Activated T-helper 1 cell treated with anti-CD3 and anti-CD28 coated beads, Interleukin-12 subunit alpha, Interleukin-12 subunit beta, Interleukin-2, Interleukin-4 antibody, amounts not matched to agents 30 ng/mL and 10 ng/mL and 1 ng/mL, durations not matched to agents 14 hours and 24 hours and 36 hours (primary cell): ENCODE measurements at regions of chr5 and their contacts with region 1.

Region 1: DNA sequence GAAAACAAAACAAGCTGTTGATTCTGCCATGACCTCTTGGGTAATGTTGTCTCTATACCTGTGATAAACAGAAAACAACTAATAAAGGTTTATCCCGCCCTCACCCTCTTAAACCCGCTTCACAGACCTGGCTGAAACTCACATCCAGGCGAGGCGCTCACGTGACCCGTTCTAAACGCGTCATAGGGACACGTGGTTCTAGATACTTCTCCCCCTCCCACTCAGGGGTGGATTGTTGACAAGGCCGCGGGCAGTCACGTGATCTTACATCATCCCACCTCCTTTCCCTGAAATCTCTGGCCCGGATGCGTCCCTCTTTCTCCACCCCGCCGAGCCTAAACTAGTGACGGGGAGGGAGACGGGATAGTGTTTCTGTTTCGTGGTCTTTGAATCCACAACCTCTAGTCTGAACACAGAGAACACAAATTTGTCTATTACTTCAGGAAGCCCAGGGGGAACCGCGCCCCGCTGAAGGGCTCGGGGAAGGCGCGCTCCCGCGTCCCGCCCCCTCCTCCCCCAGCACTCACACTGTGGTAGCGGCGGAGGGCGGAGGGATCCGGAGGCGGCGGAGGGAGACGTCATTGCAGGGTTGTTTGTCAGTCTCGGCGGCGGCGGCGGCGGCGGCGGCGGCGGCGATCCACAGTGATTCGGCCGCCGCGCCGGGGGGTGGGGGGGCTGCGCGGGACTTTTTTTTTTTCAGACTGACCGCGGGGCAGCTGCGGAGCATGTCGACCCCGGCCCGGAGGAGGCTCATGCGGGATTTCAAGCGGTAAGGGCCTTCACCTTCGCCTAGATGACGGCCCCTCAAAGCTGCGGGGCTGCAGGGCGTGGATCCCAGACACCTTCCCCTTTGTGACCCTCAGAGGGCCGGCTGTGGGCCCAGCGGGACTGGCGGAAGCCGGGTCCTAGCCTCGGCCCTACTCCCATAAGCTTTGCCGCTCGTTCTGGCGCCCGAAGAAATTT is at the start of gene UBE2B:
- DNase-seq: peak; percentile 95
- H3K4me3 Mint-ChIP-seq: peak within 1 kb of the TSS; percentile 99
- H3K27ac Mint-ChIP-seq: peak within 1 kb of the TSS; percentile 97
- H3K4me1 Mint-ChIP-seq: peaks cover 66% of the 10 kb centered on the region
- H3K27me3 Mint-ChIP-seq: peaks cover 2% of the 10 kb centered on the region
- total RNA-seq, gene UBE2B: 98.9 and 108 TPM in 2 replicates

Region 2: DNA sequence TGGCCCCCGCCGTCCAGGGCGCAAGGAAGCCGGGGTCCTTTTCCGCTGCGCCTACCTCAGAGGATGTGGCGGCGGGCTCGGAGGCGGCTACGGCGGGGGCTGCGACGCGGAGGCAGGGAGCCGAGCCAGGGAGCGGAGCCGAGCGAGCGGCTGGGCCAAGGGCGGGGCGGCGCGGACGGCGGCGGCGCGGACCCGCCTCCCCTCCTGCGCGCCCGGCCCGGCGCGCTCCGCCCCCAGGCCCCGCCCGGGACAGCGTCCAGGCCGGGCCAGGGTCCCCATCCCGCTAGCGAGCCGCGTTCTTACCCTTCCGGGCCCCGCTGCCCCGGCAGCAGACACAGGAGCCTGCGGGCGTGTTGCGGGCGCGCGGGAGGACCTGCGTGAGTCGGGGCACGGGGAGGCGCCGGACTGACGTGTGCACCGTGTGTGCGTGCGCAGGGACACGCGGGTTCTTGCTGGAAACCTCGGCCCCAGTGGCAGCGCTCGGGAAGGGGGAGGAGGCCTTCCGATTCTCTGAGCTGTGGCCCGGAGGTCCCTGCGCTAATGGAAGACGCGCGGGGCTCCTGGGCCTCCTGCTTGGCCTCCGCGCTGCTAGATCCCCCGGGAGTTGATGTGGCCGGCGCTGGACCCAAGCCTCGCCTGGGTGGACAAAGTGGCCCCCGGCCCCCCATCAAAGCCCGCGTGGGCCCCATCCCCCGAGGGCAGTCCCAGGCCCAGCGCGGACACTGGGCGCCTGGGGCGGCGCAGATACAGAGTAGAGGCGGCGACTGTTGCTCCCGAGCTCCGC is 366.4 kb before region 1 on chr5 and contains the start of gene VDAC1:
- intact Hi-C with region 1: loop called (anchors 1 kb)
- DNase-seq: peak; percentile 78
- H3K4me3 Mint-ChIP-seq: peak within 1 kb of the TSS; percentile 93
- H3K27ac Mint-ChIP-seq: peak within 1 kb of the TSS; percentile 97
- H3K4me1 Mint-ChIP-seq: peaks cover 53% of the 10 kb centered on the region
- H3K27me3 Mint-ChIP-seq: peaks cover 2% of the 10 kb centered on the region
- total RNA-seq, gene VDAC1: 440 and 442 TPM in 2 replicates

Region 3: GRCh38 chr5:134411546-134412266 is 40.6 kb after region 1 on chr5 and contains the start of gene CDKN2AIPNL:
- intact Hi-C with region 1: loop called (anchors 1 kb)
- DNase-seq: peak; percentile 87
- H3K4me3 Mint-ChIP-seq: peak within 1 kb of the TSS; percentile 97
- H3K27ac Mint-ChIP-seq: peak within 1 kb of the TSS; percentile 90
- H3K4me1 Mint-ChIP-seq: peaks cover 26% of the 10 kb centered on the region
- H3K27me3 Mint-ChIP-seq: no peaks in the 10 kb centered on the region
- total RNA-seq, gene CDKN2AIPNL: 33.6 and 35.6 TPM in 2 replicates

Region 4: GRCh38 chr5:134586866-134587524 is 215.8 kb after region 1 on chr5:
- intact Hi-C with region 1: loop called (anchors 2 kb)
- DNase-seq: peak; percentile 72
- H3K4me3 Mint-ChIP-seq: no peak overlapping the region
- H3K27ac Mint-ChIP-seq: peak overlapping the region; percentile 52
- H3K4me1 Mint-ChIP-seq: peaks cover 14% of the 10 kb centered on the region
- H3K27me3 Mint-ChIP-seq: no peaks in the 10 kb centered on the region

Region 5: DNA sequence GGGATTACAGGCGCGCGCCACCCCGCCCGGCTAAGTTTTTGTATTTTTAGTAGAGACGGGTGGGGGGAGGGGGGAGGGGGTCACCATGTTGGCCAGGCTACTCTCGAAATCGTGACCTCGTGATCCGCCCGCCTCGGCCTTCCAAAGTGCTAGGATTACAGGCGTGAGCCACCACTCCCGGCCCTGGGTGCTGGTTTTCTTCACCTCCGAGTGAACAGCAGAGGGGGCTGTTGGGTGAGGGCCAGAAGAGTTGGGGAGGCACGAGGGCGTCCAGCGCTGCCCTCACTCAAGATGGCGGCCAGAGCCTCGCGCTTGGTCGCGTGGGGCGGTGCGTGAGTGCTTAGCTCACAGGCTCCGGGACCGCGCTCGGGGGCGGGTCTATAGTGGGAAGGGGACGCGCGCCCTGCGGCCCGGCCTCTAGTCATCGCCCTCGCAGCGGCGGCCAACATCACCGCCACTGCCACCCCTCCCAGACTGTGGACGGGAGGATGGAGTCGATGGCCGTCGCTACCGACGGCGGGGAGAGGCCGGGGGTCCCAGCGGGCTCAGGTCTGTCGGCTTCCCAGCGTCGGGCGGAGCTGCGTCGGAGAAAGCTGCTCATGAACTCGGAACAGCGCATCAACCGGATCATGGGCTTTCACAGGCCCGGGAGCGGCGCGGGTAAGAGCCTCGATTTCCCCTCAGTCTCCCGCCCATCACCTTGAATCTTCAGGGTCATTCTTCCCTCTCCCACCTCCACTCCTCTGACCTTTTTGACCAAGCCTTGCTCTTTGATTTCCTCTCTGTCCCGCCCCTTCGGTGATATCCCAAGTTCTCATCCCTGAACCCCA is 367.2 kb after region 1 on chr5 and contains the start of gene CAMLG:
- intact Hi-C with region 1: loop called (anchors 1 kb)
- DNase-seq: peak; percentile 98
- H3K4me3 Mint-ChIP-seq: peak within 1 kb of the TSS; percentile 94
- H3K27ac Mint-ChIP-seq: peak within 1 kb of the TSS; percentile 90
- H3K4me1 Mint-ChIP-seq: peaks cover 32% of the 10 kb centered on the region
- H3K27me3 Mint-ChIP-seq: no peaks in the 10 kb centered on the region
- total RNA-seq, gene CAMLG: 25.9 and 26.9 TPM in 2 replicates

Region 6: GRCh38 chr5:134904630-134905245 is 533.6 kb after region 1 on chr5 and contains the start of gene PCBD2:
- intact Hi-C with region 1: loop called (anchors 2 kb)
- DNase-seq: peak; percentile 91
- H3K4me3 Mint-ChIP-seq: peak within 1 kb of the TSS; percentile 94
- H3K27ac Mint-ChIP-seq: peak within 1 kb of the TSS; percentile 99
- H3K4me1 Mint-ChIP-seq: peaks cover 15% of the 10 kb centered on the region
- H3K27me3 Mint-ChIP-seq: no peaks in the 10 kb centered on the region
- total RNA-seq, gene PCBD2: 13.5 and 17.2 TPM in 2 replicates